ENCODE measurements at regions of chr11 and their contacts with region 1.

Region 1: DNA sequence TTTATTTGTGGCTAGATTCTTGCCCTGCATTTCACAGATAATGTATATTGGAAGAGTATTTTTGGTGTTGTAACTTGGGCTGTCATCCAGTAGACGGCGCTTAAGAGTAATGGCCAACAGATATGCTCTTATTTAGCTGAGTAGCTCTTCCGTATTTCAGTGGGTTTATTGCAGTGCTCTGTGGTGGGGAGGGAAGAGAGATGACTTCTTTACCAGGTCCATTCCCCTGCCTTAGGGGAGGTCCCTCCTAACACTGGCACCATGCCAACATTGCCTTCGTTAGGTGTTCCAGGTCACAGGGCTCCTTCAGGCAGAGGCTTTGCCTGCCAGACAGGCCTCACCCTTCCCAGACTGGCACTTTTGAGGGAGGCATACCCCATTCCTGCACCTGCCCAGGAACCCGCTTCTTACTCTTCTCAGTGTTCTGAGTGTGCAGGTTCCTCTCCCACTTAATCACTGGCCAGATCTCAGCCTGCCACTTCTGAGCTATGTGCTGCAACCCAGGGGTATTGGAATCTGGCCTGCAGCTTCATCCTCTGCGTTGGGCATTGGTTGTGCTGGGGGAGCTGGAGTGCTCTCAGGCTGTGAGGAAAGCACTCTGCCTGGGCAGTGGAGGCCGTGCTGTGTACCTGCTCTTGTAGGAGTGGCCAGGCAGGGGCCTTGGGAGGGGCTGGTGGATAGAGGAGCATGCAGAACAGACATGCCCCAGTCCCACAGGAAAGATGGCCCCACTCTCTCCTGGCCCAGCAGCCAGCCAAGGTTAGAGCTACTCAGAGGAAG is 29.4 kb upstream of the SLN start:
- DNase-seq: peak; percentile 34
- H3K4me3 Mint-ChIP-seq: no peak overlapping the region
- H3K27ac Mint-ChIP-seq: no peak overlapping the region
- H3K4me1 Mint-ChIP-seq: no peaks in the 10 kb centered on the region
- H3K27me3 Mint-ChIP-seq: peaks cover 4% of the 10 kb centered on the region

Region 2: DNA sequence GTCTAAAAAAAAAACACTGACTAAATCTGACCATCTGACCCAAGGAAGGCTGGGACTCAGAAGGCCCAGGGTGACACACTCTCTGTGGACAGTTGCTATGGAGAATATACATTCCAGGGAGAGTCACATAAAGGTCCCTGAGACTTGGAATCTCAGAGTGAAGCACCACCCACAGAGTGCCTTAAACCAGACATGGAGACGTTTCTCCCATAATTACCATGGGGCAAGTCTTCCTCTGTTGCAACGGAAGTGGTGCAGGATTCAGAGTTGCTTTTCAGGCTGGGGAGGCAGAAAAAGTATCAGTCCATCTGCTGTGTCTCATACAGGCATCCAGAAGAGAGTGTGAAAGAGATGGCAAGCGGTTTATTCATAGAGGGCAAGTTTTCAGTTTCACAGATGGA is 29.3 kb after region 1 on chr11:
- CTCF ChIA-PET with region 1: interaction called, 19 read pairs
- DNase-seq: no peak
- H3K4me3 Mint-ChIP-seq: no peak overlapping the region
- H3K27ac Mint-ChIP-seq: no peak overlapping the region
- H3K4me1 Mint-ChIP-seq: peaks cover 3% of the 10 kb centered on the region
- H3K27me3 Mint-ChIP-seq: peaks cover 6% of the 10 kb centered on the region

Region 3: DNA sequence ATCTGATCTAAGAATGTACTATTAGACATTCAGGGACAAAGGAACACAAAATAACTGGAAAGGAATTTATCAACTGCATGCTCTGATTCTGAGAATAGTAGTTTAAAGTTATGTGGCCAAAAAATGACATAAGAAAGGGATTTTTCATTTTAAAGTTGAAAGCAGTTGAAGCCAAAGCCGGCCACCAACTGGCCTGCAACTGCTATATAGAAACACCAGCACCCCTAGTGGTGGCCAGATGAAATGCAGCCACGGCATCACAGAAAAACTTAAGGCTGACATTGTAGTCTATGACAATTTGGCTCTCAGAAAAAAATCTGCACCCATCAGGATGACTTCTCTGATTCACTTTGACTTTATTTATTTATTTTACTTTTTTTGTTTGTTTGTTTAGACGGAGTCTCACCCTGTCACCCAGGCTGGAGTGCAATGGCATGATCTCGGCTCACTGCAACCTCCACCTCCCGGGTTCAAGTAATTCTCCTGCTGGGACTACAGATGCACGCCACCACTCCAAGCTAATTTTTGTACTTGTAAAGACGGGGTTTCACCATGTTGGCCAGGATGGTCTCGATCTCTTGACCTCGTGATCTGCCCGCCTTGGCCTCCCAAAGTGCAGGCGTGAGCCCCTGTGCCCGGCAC is 58.1 kb after region 1 on chr11:
- CTCF ChIA-PET with region 1: interaction called, 13 read pairs
- DNase-seq: peak; percentile 74
- H3K4me3 Mint-ChIP-seq: no peak overlapping the region
- H3K27ac Mint-ChIP-seq: no peak overlapping the region
- H3K4me1 Mint-ChIP-seq: no peaks in the 10 kb centered on the region
- H3K27me3 Mint-ChIP-seq: no peaks in the 10 kb centered on the region

Region 4: DNA sequence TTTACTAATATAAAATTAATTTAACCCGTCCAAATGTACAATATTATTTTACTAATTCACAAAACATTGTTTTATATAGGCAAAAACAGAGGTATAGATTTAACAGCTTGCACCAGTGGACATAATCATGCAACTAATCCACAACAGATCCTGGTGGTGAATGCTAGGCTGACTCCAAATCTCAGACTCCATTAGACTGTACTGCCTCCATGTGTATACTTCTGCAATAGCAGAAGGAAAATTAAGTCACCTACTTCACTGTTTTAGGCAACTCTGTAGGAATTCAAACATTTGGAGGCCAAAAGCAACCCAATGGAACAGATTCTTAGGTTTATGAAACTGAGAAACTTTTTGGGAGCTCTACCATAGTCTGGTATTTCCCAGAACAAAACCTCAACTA is 157.0 kb after region 1 on chr11:
- CTCF ChIA-PET with region 1: interaction called, 16 read pairs
- DNase-seq: no peak
- H3K4me3 Mint-ChIP-seq: no peak overlapping the region
- H3K27ac Mint-ChIP-seq: no peak overlapping the region
- H3K4me1 Mint-ChIP-seq: no peaks in the 10 kb centered on the region
- H3K27me3 Mint-ChIP-seq: peaks cover 22% of the 10 kb centered on the region